AG04449 (cell line): ENCODE measurements at regions of chr18 and their contacts with region 1.

Region 1: GRCh38 chr18:35040988-35041814 is at the start of gene MAPRE2:
- DNase-seq: peak; percentile 75
- H3K4me3 ChIP-seq: peak within 1 kb of the TSS; percentile 98
- CTCF ChIP-seq: no peak

Region 2: DNA sequence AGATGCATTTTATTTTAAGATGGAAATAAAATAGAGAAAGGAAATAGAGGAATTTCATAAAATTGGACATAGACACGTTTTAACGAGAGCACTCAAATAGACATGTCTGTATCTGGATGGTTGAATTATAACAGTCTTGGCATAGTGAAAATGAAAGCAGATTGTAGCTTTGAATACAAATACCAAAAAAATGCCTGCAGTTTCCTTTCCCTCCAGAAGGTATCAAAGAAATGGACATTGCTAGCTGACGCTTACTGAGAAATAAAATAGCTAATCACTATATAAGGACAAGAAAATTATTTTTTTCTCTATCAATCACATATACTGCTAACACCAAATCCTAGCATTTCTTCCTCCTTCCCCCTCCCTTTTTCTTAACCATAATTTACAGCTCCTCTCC is 11.4 kb before region 1 on chr18:
- CTCF ChIA-PET with region 1: interaction called, 27 read pairs
- POLR2A ChIA-PET with region 1: interaction called, 12 read pairs
- DNase-seq: no peak
- H3K4me3 ChIP-seq: no peak overlapping the region
- CTCF ChIP-seq: no peak

Region 3: GRCh38 chr18:35296060-35296459 is 254.9 kb after region 1 on chr18:
- CTCF ChIA-PET with region 1: no interaction called
- POLR2A ChIA-PET with region 1: no interaction called
- DNase-seq: no peak
- H3K4me3 ChIP-seq: no peak overlapping the region
- CTCF ChIP-seq: no peak